ENCODE measurements at regions of chr1 and their contacts with region 1.

Region 1: DNA sequence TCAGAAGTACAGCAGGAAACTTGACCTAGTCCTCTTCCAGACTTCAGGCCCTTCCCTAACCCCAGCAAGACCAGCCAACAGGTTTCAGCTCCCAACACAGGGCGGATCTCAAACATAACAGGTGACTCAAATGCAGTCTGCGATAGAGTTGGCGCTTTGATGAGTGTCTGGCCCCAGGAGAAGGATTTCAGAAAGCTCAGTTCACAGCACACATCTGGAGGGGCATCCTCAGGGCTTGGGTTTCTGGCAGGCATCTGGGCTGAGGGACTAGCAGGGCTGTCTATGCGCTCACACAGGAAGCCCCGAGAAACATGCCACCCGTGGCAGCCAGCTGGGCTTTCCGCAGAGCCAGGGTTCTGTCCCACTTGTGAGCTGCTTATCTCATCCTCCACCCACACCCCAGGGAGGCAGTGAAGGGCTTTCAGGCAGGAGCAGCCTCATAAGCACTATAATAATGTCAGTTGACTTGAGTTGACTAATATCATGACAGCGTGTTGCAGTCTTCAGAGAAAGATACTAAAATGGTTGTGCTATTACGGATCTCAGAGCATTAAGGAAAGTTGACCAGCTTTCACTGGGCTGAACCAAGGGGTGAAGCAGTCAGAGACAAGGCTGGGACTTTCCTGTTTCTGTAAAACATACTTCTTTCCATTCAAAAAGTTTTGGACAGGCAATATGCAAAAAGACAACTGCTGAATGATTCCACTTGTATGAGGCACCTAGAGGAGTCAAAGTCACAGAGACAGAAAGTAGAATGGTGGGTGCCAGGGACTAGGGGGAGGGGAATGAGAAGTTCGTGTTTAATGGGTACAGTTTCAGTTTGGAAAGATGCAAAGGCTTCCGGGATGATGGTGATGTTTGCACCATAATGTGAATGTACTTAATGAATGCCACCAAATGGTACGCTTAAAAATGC is 233.0 kb upstream of the IRF2BP2 start:
- DNase-seq: peak; percentile 67
- H3K4me3 Mint-ChIP-seq: peak overlapping the region; percentile 54
- H3K27ac Mint-ChIP-seq: peak overlapping the region; percentile 90
- H3K4me1 Mint-ChIP-seq: peaks cover 96% of the 10 kb centered on the region
- H3K27me3 Mint-ChIP-seq: peaks cover 3% of the 10 kb centered on the region

Region 2: DNA sequence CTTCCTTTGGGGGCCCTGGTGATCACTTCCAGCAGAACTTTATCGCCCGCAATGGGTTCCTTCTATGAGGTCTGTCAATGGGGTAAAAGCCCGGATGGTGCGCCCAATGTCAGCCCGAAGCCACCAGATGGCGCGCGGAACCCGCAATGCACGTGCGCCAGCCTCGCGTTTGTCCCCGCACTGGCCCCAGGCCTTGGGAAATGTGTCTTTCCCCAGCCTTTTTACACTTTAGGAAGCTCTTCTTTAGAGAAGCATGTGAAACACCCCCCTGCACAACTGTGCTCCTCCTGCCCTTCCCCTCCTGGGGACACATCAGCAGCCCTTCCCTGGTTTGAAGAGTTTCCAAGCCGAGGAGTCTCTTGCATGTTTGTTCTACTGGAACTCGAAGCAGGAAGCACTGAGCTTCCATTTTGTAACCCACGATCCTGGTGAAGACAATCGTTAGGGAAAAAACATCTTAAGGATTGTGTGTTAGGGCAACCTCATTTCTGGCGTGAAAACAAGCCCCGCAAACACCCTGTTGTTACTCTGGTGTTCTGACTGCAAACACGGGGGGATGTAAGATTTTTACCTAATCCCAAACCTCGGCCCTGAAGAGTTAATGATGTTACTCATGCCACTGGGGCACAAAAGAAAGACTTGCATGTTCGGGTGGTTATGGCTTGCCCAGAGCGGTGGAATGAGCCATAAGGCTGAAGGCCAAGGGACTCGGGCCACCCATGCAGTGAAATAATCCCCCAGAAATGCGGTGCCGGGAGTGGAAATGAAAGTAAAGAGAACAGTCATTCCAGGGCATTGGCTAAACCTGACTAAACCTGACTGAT is 343.7 kb before region 1 on chr1:
- intact Hi-C with region 1: loop called (anchors 1 kb)
- DNase-seq: peak; percentile 78
- H3K4me3 Mint-ChIP-seq: no peak overlapping the region
- H3K27ac Mint-ChIP-seq: peak overlapping the region; percentile 80
- H3K4me1 Mint-ChIP-seq: peaks cover 83% of the 10 kb centered on the region
- H3K27me3 Mint-ChIP-seq: no peaks in the 10 kb centered on the region

Region 3: GRCh38 chr1:234656856-234657654 is 185.9 kb before region 1 on chr1:
- intact Hi-C with region 1: no loop called
- DNase-seq: no peak
- H3K4me3 Mint-ChIP-seq: no peak overlapping the region
- H3K27ac Mint-ChIP-seq: no peak overlapping the region
- H3K4me1 Mint-ChIP-seq: peaks cover 15% of the 10 kb centered on the region
- H3K27me3 Mint-ChIP-seq: no peaks in the 10 kb centered on the region

Region 4: GRCh38 chr1:234772345-234773147 is 70.4 kb before region 1 on chr1:
- intact Hi-C with region 1: loop called (anchors 1 kb)
- DNase-seq: peak; percentile 83
- H3K4me3 Mint-ChIP-seq: peak overlapping the region; percentile 80
- H3K27ac Mint-ChIP-seq: peak overlapping the region; percentile 100
- H3K4me1 Mint-ChIP-seq: peaks cover 56% of the 10 kb centered on the region
- H3K27me3 Mint-ChIP-seq: no peaks in the 10 kb centered on the region

Region 5: GRCh38 chr1:234881893-234882771 is 39.1 kb after region 1 on chr1:
- intact Hi-C with region 1: loop called (anchors 1 kb)
- DNase-seq: no peak
- H3K4me3 Mint-ChIP-seq: no peak overlapping the region
- H3K27ac Mint-ChIP-seq: peak overlapping the region; percentile 47
- H3K4me1 Mint-ChIP-seq: peaks cover 69% of the 10 kb centered on the region
- H3K27me3 Mint-ChIP-seq: no peaks in the 10 kb centered on the region

Region 6: GRCh38 chr1:234978397-234979295 is 135.7 kb after region 1 on chr1:
- intact Hi-C with region 1: loop called (anchors 1 kb)
- DNase-seq: no peak
- H3K4me3 Mint-ChIP-seq: peak overlapping the region; percentile 83
- H3K27ac Mint-ChIP-seq: peak overlapping the region; percentile 92
- H3K4me1 Mint-ChIP-seq: peaks cover 88% of the 10 kb centered on the region
- H3K27me3 Mint-ChIP-seq: no peaks in the 10 kb centered on the region

Region 7: GRCh38 chr1:235050911-235051360 is 208.0 kb after region 1 on chr1:
- intact Hi-C with region 1: loop called (anchors 1 kb)
- DNase-seq: no peak
- H3K4me3 Mint-ChIP-seq: no peak overlapping the region
- H3K27ac Mint-ChIP-seq: peak overlapping the region; percentile 78
- H3K4me1 Mint-ChIP-seq: peaks cover 49% of the 10 kb centered on the region
- H3K27me3 Mint-ChIP-seq: no peaks in the 10 kb centered on the region

Measured in activated T-helper 1 cell treated with anti-CD3 and anti-CD28 coated beads, Interleukin-12 subunit alpha, Interleukin-12 subunit beta, Interleukin-2, Interleukin-4 antibody, amounts not matched to agents 30 ng/mL and 10 ng/mL and 1 ng/mL, durations not matched to agents 14 hours and 24 hours and 36 hours (primary cell).